Activated CD8-positive, alpha-beta T cell treated with anti-CD3 and anti-CD28 coated beads for 36 hours (primary cell): ENCODE measurements at regions of chr7 and their contacts with region 1.

Region 1: DNA sequence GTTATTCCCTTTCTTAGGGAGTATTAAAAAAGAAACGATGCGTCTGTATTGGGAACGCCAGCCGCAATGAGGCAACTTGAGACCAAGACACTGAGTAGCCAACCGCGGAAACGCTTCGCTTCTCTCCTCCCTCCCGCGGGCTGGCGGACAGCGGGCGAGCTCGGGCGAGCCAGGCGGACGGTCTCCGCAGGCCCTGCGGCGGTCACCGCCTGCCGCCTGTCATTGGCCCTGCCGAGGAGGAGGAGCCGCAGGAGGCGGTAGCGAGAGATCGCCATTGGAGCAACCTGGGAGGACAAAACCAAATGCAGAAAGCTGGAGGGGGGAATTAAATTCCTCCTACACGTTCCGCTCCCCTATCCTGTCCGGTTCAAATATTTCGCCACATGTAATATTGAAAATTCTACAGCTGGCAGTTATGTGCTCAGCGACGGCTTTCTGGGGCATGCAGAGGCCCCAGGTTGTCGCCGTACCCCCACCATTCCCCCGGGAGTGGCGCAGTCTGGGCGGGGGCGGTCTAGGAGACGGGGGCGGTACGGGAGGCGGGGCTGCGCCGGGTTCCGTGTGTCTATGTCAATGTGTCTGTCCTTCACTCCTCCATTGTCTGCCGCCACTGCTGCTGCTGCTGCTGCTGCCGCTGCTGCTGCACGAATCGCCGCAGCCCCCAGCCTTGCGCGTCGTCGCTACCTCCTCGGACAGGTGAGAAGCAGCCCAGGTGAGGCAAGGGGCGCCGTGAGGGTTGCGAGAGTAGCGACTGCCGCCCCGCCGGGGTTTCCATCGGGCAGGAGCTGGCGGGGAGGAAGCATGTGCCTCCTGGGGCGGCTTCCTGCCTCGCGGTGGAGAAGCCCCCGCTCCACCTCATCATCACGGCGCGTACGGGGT is at the starts of genes ANKMY2 and BZW2:
- DNase-seq: peak; percentile 93
- ATAC-seq: peak; percentile 91
- H3K4me3 Mint-ChIP-seq: peak within 1 kb of the TSS; percentile 93
- H3K27ac Mint-ChIP-seq: peak within 1 kb of the TSS; percentile 94
- H3K4me1 Mint-ChIP-seq: peaks cover 52% of the 10 kb centered on the region
- H3K27me3 Mint-ChIP-seq: no peaks in the 10 kb centered on the region
- CTCF ChIP-seq: no peak
- total RNA-seq, gene ANKMY2: 9.8 to 10.5 TPM
- total RNA-seq, gene BZW2: 120 to 123 TPM

Region 2: GRCh38 chr7:16657656-16658279 is 11.9 kb after region 1 on chr7:
- CTCF ChIA-PET with region 1: interaction called, 3 read pairs
- POLR2A ChIA-PET with region 1: interaction called, 30 read pairs
- intact Hi-C with region 1: no loop called
- DNase-seq: no peak
- ATAC-seq: no peak
- H3K4me3 Mint-ChIP-seq: no peak overlapping the region
- H3K27ac Mint-ChIP-seq: no peak overlapping the region
- H3K4me1 Mint-ChIP-seq: peaks cover 33% of the 10 kb centered on the region
- H3K27me3 Mint-ChIP-seq: no peaks in the 10 kb centered on the region
- CTCF ChIP-seq: no peak